CD4-positive, alpha-beta T cell (primary cell): ENCODE measurements at regions of chr16 and their contacts with region 1.

Region 1: GRCh38 chr16:68179196-68179795 is 56.6 kb downstream of the ESRP2 start:
- DNase-seq: no peak
- ATAC-seq: no peak
- H3K4me3 ChIP-seq: no peak overlapping the region
- H3K4me3 Mint-ChIP-seq: no peak overlapping the region
- H3K27ac ChIP-seq: no peak overlapping the region
- H3K27ac Mint-ChIP-seq: peak overlapping the region; percentile 70
- H3K4me1 ChIP-seq: no peaks in the 10 kb centered on the region
- H3K4me1 Mint-ChIP-seq: peaks cover 12% of the 10 kb centered on the region
- H3K27me3 ChIP-seq: no peaks in the 10 kb centered on the region
- H3K27me3 Mint-ChIP-seq: no peaks in the 10 kb centered on the region
- CTCF ChIP-seq: no peak

Region 2: DNA sequence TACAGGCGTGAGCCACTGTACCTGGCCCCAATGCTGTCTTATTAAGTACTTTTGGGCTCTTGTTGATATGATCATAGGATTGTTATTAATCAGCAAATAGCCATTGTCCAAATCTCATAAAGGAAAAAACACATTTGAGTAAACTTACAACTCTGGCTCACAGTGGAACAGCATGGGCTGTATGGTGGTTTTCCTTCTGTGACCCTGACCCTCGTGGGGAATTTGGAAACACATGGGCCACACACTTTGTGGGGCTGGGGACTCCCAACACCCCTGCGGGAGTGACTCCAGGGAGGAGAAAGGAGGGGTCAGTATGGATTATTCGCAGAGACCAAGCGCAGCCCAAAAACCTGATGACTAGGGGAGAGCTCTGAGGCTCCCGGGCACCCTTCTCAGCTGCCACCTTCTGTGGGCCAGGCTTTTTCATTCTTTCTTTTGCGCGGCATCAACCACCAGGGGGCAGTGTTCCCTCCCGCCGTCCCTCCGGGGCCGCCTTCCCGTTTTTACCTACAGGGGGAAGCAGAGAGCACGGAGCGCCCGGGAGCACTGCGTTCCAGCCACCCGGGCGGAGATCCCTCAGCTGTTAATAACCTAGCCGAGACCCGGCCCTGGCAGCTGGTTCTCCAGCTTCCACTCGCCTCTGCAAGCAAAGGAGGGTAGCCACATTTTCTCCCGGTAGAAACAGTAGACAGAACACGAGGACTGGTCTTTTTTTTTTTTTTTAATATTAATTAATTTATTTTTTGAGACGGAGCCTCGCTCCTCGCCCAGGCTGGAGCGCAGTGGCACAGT is 362.9 kb before region 1 on chr16:
- CTCF ChIA-PET with region 1: no interaction called
- POLR2A ChIA-PET with region 1: no interaction called
- intact Hi-C with region 1: no loop called
- DNase-seq: peak; percentile 75 to 95 (median 89)
- ATAC-seq: peak; percentile 99
- H3K4me3 ChIP-seq: no peak overlapping the region
- H3K4me3 Mint-ChIP-seq: peak overlapping the region; percentile 56
- H3K27ac ChIP-seq: no peak overlapping the region
- H3K27ac Mint-ChIP-seq: no peak overlapping the region
- H3K4me1 ChIP-seq: peaks cover 7% of the 10 kb centered on the region
- H3K4me1 Mint-ChIP-seq: peaks cover 7% of the 10 kb centered on the region
- H3K27me3 ChIP-seq: no peaks in the 10 kb centered on the region
- H3K27me3 Mint-ChIP-seq: no peaks in the 10 kb centered on the region
- CTCF ChIP-seq: peak; percentile 100

Region 3: GRCh38 chr16:68136515-68136914 is 42.8 kb before region 1 on chr16:
- CTCF ChIA-PET with region 1: no interaction called
- POLR2A ChIA-PET with region 1: no interaction called
- intact Hi-C with region 1: loop called in 1 of 2 experiments (anchors 5 kb)
- DNase-seq: no peak
- ATAC-seq: no peak
- H3K4me3 ChIP-seq: no peak overlapping the region
- H3K4me3 Mint-ChIP-seq: no peak overlapping the region
- H3K27ac ChIP-seq: no peak overlapping the region
- H3K27ac Mint-ChIP-seq: peak overlapping the region; percentile 42
- H3K4me1 ChIP-seq: peaks cover 9% of the 10 kb centered on the region
- H3K4me1 Mint-ChIP-seq: peaks cover 51% of the 10 kb centered on the region
- H3K27me3 ChIP-seq: no peaks in the 10 kb centered on the region
- H3K27me3 Mint-ChIP-seq: no peaks in the 10 kb centered on the region
- CTCF ChIP-seq: no peak

Region 4: GRCh38 chr16:68436581-68436980 is 257.3 kb after region 1 on chr16:
- CTCF ChIA-PET with region 1: no interaction called
- POLR2A ChIA-PET with region 1: no interaction called
- intact Hi-C with region 1: no loop called
- DNase-seq: no peak
- ATAC-seq: no peak
- H3K4me3 ChIP-seq: no peak overlapping the region
- H3K4me3 Mint-ChIP-seq: no peak overlapping the region
- H3K27ac ChIP-seq: no peak overlapping the region
- H3K27ac Mint-ChIP-seq: no peak overlapping the region
- H3K4me1 ChIP-seq: peaks cover 9% of the 10 kb centered on the region
- H3K4me1 Mint-ChIP-seq: peaks cover 28% of the 10 kb centered on the region
- H3K27me3 ChIP-seq: peaks cover 0 to under 1% of the 10 kb centered on the region in 2 experiments
- H3K27me3 Mint-ChIP-seq: peaks cover 11% of the 10 kb centered on the region
- CTCF ChIP-seq: no peak